ENCODE measurements at regions of chr13 and their contacts with region 1.

Region 1: DNA sequence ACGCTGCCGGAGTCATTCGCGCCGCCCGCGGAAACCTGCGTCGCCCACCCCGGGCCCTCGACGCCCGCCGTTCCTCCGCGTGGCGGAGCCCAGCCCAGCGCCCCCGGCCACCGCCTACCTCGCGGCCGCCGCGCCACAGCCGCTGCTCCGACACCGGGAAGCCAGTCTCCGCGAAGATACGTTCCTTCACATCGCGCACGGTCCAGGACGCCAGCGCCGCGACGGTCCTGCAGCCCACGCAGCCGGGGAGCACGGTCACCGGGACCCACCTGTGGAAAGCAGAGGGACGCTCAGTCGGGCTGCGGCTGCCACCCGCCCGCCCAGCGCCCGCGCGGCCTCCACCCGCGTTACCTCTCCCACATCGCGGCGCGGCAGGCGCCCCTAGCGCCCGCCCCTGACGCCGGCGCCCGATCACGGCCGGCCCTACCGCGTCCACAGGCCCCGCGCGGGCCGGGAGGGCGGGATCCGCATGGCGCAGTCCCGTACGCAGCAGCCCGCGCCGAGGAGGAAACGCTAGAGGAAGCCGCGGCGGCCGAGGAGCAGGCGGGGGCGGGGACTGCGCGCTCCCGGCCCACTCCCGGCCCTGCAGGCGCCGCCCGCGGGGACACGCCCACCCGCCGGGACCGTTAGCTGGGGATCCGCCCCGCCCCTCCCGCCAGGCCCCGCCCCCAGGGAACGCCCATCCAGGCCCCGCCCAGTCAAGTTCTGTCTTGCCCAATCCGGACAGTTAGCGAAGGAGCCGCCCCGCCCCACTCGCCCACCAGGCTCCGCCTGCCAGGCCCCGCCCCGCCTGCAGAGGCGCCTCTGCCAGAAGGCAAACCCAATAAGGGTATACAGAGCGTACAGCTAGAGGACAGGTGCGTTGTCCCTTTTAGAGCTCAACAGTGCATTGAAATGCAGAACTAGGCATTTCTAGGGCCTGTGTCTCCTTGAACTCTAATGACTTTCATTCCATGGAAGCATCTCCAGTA is 58.2 kb downstream of the SACS start:
- DNase-seq: peak; percentile 94 to 96
- H3K4me3 ChIP-seq: peak overlapping the region; percentile 70
- H3K4me3 Mint-ChIP-seq: peak overlapping the region; percentile 63
- H3K27ac Mint-ChIP-seq: no peak overlapping the region
- H3K4me1 ChIP-seq: peaks cover 12% of the 10 kb centered on the region; the same call in 1 of the 2 replicates
- H3K4me1 Mint-ChIP-seq: peaks cover 5% of the 10 kb centered on the region
- H3K27me3 ChIP-seq: no peaks in the 10 kb centered on the region
- H3K27me3 Mint-ChIP-seq: peaks cover 8% of the 10 kb centered on the region
- CTCF ChIP-seq: peak in 1 of 2 experiments; percentile 15

Region 2: GRCh38 chr13:22996983-22997382 is 378.3 kb before region 1 on chr13:
- CTCF ChIA-PET with region 1: no interaction called
- POLR2A ChIA-PET with region 1: no interaction called
- intact Hi-C with region 1: no loop called
- DNase-seq: no peak
- H3K4me3 ChIP-seq: no peak overlapping the region
- H3K4me3 Mint-ChIP-seq: no peak overlapping the region
- H3K27ac Mint-ChIP-seq: no peak overlapping the region
- H3K4me1 ChIP-seq: peaks cover 7% of the 10 kb centered on the region; the same call in 1 of the 2 replicates
- H3K4me1 Mint-ChIP-seq: no peaks in the 10 kb centered on the region
- H3K27me3 ChIP-seq: no peaks in the 10 kb centered on the region
- H3K27me3 Mint-ChIP-seq: no peaks in the 10 kb centered on the region
- CTCF ChIP-seq: no peak

Region 3: GRCh38 chr13:23433171-23434153 is 58.2 kb after region 1 on chr13 and contains the start of gene SACS:
- CTCF ChIA-PET with region 1: interaction called, 5 read pairs
- POLR2A ChIA-PET with region 1: no interaction called
- intact Hi-C with region 1: loop called (anchors 5 kb)
- DNase-seq: peak in 1 of 2 experiments; percentile 46
- H3K4me3 ChIP-seq: peak within 1 kb of the TSS; percentile 47
- H3K4me3 Mint-ChIP-seq: peak within 1 kb of the TSS; percentile 93
- H3K27ac Mint-ChIP-seq: peak within 1 kb of the TSS; percentile 18
- H3K4me1 ChIP-seq: no peaks in the 10 kb centered on the region
- H3K4me1 Mint-ChIP-seq: peaks cover 7% of the 10 kb centered on the region
- H3K27me3 ChIP-seq: no peaks in the 10 kb centered on the region
- H3K27me3 Mint-ChIP-seq: peaks cover 4% of the 10 kb centered on the region
- CTCF ChIP-seq: no peak
- total RNA-seq, gene SACS: 4.5 and 4.9 TPM in 2 replicates

Region 4: DNA sequence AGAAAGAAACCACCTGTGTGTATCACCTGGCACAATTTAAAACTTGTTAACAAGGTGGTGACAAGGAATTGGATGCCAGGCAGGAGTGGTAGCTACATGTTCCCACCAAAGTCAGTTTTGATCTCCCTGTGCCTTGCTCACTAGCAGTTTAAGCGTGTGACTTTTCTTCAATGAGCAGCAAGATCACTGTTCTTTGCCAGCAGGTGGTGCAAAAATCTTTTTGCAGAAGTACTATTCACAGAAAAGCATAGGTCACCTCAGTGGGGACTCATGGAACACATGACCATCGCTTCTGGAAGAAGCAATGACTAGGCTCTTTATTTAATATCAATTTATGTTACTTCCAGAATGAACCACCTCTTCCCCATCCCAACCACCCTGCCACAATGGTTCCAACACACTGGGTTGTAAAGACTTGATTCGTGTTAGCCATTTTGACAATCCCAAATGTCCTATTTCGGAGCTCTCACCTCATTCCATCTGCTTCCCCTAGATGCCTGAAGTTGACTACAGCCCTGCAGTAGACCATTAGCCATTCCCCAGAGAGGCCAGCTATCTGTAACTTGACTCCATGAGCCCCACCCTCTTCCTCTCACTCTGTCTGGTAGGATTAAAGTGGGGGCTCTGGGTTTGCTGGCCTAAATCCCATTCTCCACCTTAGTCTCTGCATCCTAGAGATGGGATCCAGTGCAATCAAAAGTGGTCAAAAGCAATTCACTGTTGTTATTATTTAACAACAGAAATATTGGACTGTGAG is 135.9 kb after region 1 on chr13:
- CTCF ChIA-PET with region 1: no interaction called
- POLR2A ChIA-PET with region 1: no interaction called
- intact Hi-C with region 1: no loop called
- DNase-seq: peak; percentile 48 to 58
- H3K4me3 ChIP-seq: no peak overlapping the region
- H3K4me3 Mint-ChIP-seq: no peak overlapping the region
- H3K27ac Mint-ChIP-seq: no peak overlapping the region
- H3K4me1 ChIP-seq: peaks cover 13% of the 10 kb centered on the region
- H3K4me1 Mint-ChIP-seq: peaks cover 7% of the 10 kb centered on the region
- H3K27me3 ChIP-seq: no peaks in the 10 kb centered on the region
- H3K27me3 Mint-ChIP-seq: no peaks in the 10 kb centered on the region
- CTCF ChIP-seq: peak; percentile 40 to 62

Region 5: DNA sequence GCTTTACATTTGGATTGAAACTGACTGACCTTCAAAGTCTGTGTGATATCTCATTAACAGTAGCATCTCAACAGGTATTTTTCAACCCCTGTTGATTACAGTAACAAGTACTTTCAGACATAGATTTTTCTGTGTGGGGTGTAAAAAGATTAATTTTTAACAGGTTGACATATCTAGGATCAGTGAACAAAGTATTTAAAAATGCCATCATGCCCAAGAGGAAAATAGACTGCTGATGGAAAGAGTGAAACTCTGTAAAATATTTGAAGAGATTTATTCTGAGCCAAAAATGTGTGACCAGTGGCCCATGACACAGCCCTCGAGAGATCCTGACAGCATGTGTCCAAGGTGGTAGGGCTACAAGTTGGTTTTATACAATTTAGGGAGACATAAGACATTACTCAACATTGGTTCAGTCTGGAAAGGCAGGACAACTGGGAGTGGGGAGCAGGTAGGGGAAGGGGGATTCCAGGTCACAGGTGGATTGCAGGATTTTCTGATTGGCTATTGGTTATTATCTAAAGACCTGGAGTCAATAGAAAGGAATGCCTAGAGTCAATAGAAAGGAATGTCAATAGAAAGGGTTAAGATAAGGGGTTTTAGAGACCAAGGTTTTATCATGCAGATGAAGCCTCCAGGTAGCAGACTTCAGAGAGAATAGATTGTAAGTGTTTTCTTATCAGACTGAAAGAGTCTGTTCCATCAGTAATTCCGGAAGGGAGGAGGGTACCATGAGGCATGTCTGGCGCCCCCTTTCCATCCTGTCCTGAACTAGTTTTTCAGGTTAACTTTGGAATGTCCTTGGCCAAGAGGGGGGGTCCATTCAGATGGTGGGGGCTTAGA is 224.0 kb after region 1 on chr13:
- CTCF ChIA-PET with region 1: no interaction called
- POLR2A ChIA-PET with region 1: no interaction called
- intact Hi-C with region 1: no loop called
- DNase-seq: peak; percentile 90 to 93
- H3K4me3 ChIP-seq: no peak overlapping the region
- H3K4me3 Mint-ChIP-seq: peak overlapping the region; percentile 42
- H3K27ac Mint-ChIP-seq: peak overlapping the region; percentile 94
- H3K4me1 ChIP-seq: peaks cover 35% of the 10 kb centered on the region
- H3K4me1 Mint-ChIP-seq: peaks cover 45% of the 10 kb centered on the region
- H3K27me3 ChIP-seq: no peaks in the 10 kb centered on the region
- H3K27me3 Mint-ChIP-seq: no peaks in the 10 kb centered on the region
- CTCF ChIP-seq: peak in 1 of 2 experiments; percentile 52

Measured in Caco-2 (cell line).